Caki2 (cell line): ENCODE measurements at regions of chr10 and their contacts with region 1.

Region 1: GRCh38 chr10:96374985-96375830 is 16.4 kb upstream of the OPALIN start:
- DNase-seq: peak; percentile 86

Region 2: GRCh38 chr10:96421995-96422924 is 47.1 kb after region 1 on chr10:
- in situ Hi-C with region 1: no loop called
- DNase-seq: no peak

Region 3: DNA sequence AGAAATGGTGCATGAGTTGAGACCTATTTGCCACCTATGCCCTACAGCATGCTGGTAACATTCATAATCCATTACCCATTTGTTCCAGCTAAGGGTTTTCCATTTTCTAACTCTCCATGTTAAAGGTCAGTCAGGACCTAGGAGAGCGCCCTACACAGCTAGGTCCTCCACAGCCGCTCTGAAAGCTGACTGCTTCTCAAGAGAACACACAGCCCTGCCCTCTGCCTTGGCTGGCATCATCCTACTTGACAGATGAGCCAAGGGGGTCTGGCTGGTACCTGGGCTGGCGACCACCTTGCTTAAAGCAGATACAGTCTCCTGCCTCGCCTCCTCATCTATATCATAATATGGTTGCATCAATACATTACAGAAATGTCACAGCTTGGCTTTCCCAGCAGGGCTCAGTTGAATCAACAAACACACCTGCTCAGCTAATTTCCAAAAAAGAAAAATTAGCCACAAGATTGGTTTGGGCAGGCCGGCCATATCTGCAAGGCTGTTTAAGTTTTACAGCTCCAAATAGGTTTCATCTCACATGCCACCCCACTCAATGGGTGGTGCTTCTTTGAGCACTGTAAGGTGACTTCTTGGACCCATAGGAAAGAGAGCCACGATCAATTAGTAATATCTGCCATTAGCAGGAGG is 121.2 kb after region 1 on chr10:
- in situ Hi-C with region 1: loop called (anchors 25 kb)
- DNase-seq: peak; percentile 13

Region 4: DNA sequence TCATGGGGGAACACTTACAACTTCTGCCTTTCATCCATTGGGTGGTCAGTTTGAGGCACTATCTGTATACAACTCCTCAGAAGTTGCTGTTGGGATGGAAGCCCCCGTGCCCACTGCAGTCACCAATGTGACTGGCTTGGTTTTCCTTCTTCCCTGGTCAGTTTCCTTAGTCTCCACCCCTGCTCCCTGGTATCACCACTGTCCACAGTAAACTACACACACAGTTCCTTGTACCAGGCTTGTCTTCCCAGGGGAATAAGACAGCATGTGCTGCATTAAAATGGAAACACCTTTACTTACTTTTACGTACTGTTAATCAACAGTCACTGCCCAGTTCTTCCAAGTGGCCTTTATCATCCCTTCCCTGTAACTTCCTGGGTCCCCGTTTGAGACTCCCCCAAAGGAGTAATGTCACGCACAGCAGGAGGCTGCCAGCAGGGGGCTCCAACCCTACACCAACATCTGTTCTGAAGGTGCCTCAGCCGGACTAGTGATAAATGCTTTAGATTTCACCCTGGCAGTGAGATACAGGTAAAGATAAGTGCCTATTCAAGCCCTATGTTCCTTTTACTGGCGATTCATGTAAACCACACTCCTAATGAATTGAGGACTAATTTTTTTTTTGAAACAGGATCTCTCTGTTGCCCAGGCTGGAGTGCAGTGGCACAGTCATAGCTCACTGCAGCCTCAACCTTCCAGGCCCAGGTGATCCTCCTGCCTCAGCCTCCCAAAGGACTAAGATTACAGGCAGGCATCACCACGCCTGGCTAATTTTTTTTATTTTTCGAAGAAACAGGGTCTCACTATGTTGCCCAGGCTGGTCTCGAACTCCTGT is 390.4 kb after region 1 on chr10:
- in situ Hi-C with region 1: no loop called
- DNase-seq: no peak